GM18951 (cell line): ENCODE measurements at regions of chr1 and their contacts with region 1.

Region 1: DNA sequence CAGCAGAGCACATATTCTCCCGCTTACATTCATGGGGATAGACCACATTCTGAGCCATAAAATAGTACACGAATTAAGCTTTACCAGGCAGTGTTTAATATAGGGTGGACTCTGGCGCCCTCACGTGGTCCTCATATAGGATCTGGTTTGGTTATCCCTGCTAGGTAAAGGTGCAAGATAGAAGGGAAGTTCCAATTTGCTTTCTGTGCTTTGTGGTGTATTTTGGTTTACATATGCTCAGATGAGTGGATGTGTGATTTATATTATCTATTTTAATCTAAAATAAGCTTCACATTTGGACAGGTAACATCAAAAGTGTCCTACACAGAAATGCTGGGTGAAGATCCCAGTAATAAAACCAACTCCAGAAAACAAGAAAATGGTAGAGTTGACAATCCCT is 3.6 kb downstream of the CR1 start:
- POLR2A ChIP-seq: no peak

Region 2: GRCh38 chr1:207084701-207085180 is 414.8 kb before region 1 on chr1:
- in situ Hi-C with region 1: loop called (anchors 10 kb)
- POLR2A ChIP-seq: no peak

Region 3: DNA sequence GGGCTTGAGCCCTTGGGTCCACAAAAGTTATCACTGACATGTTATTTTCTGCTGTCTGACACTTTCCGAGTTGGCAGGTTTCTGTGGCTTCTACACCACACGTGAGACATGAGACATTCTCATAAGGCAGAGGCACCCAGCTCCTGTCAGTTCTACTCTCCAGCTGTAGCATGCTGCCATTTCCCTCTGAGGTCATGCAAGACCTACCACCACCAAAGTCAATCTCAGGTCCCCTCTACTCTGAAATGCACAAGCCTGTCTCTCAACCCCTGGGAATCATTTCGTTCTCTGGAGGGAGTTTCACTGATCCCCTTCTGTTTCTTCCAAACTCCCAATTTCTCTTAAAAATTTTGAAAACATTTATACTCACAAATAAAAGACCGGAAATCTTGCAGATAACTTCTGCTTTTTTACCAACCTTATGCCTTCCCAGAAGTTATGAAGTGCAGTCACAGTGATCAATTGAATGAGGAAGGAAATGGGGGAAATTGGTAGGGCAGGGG is 84.9 kb before region 1 on chr1:
- in situ Hi-C with region 1: loop called (anchors 5 kb)
- POLR2A ChIP-seq: no peak